ENCODE measurements at regions of chr6 and their contacts with region 1.

Region 1: GRCh38 chr6:12051861-12052368 is 39.8 kb downstream of the HIVEP1 start:
- DNase-seq: peak; percentile 84
- ATAC-seq: peak; percentile 97
- H3K4me3 Mint-ChIP-seq: peak overlapping the region; percentile 55
- H3K27ac Mint-ChIP-seq: peak overlapping the region; percentile 84
- H3K4me1 Mint-ChIP-seq: peaks cover 59% of the 10 kb centered on the region
- H3K27me3 Mint-ChIP-seq: no peaks in the 10 kb centered on the region

Region 2: GRCh38 chr6:12011276-12012076 is 40.4 kb before region 1 on chr6:
- CTCF ChIA-PET with region 1: interaction called, 3 read pairs
- POLR2A ChIA-PET with region 1: interaction called, 11 read pairs
- DNase-seq: peak; percentile 98
- ATAC-seq: peak; percentile 78
- H3K4me3 Mint-ChIP-seq: peak overlapping the region; percentile 82
- H3K27ac Mint-ChIP-seq: peak overlapping the region; percentile 95
- H3K4me1 Mint-ChIP-seq: peaks cover 48% of the 10 kb centered on the region
- H3K27me3 Mint-ChIP-seq: no peaks in the 10 kb centered on the region

Region 3: DNA sequence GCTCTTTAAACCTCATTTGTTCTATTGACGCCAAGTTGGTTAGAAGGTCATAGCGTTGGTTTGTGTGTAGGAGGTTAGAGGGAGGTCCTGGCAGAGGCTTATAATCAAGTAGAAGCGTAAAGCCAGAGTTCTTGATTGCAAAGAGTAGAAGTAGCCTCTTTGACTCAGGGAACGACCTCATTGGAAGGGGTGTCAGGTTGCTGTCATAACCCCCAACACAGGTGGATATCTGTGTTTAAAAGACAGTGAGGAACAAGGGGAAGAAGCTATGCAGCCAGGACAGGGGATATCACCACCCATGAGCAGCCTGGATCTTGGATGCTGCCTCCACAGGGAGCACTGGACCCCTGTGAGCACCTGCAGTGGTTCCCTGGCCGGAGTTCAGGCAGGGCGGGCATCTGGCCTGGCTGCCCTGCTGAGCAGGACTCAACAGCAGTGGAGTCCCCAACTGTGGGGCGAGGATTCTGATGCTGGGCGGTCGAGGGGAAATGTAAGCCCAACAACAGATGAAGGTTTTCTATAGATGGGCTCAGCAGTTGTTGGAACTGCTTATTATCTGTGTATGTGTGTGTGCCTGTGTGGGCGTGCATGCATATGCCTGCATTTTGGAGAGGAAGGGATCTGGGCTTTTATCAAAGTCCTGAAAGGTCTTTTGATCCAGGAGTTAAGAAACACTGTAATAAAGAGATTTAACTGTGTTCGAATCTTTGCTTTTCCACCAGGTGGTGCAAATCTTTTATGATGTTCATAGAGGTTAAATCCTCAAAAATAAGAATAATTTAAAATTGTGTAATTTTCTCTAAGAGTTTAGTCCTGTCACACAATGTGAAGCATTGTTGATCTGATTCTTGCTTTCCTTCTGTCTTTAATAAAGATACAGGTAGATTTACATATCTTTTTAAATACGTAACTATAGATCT is 12.1 kb before region 1 on chr6:
- CTCF ChIA-PET with region 1: interaction called, 11 read pairs
- POLR2A ChIA-PET with region 1: no interaction called
- DNase-seq: no peak
- ATAC-seq: no peak
- H3K4me3 Mint-ChIP-seq: no peak overlapping the region
- H3K27ac Mint-ChIP-seq: peak overlapping the region; percentile 45
- H3K4me1 Mint-ChIP-seq: peaks cover 59% of the 10 kb centered on the region
- H3K27me3 Mint-ChIP-seq: no peaks in the 10 kb centered on the region

Measured in activated CD8-positive, alpha-beta T cell treated with anti-CD3 and anti-CD28 coated beads, Interleukin-2, amount 10 ng/mL, durations not matched to agents 7 days and 5 days (primary cell).